CD4-positive, alpha-beta T cell (primary cell): ENCODE measurements at regions of chr3 and their contacts with region 1.

Region 1: GRCh38 chr3:17151598-17152373 is 267.0 kb downstream of the PLCL2 start:
- DNase-seq: peak; percentile 53 to 93 (median 70)
- ATAC-seq: peak; percentile 93
- H3K4me3 ChIP-seq: peak overlapping the region; percentile 10
- H3K4me3 Mint-ChIP-seq: no peak overlapping the region
- H3K27ac ChIP-seq: peak overlapping the region; percentile 44
- H3K27ac Mint-ChIP-seq: peak overlapping the region; percentile 85
- H3K4me1 ChIP-seq: peaks cover 36% of the 10 kb centered on the region
- H3K4me1 Mint-ChIP-seq: peaks cover 34% of the 10 kb centered on the region
- H3K27me3 ChIP-seq: no peaks in the 10 kb centered on the region
- H3K27me3 Mint-ChIP-seq: no peaks in the 10 kb centered on the region
- CTCF ChIP-seq: no peak

Region 2: GRCh38 chr3:16511681-16512434 is 639.9 kb before region 1 on chr3:
- CTCF ChIA-PET with region 1: no interaction called
- POLR2A ChIA-PET with region 1: no interaction called
- intact Hi-C with region 1: no loop called
- DNase-seq: peak; percentile 57 to 93 (median 68)
- ATAC-seq: peak; percentile 83
- H3K4me3 ChIP-seq: peak overlapping the region; percentile 92
- H3K4me3 Mint-ChIP-seq: peak overlapping the region; percentile 91
- H3K27ac ChIP-seq: peak overlapping the region; percentile 46 to 85
- H3K27ac Mint-ChIP-seq: peak overlapping the region; percentile 89
- H3K4me1 ChIP-seq: peaks cover 72% of the 10 kb centered on the region
- H3K4me1 Mint-ChIP-seq: peaks cover 84% of the 10 kb centered on the region
- H3K27me3 ChIP-seq: no peaks in the 10 kb centered on the region
- H3K27me3 Mint-ChIP-seq: no peaks in the 10 kb centered on the region
- CTCF ChIP-seq: no peak

Region 3: GRCh38 chr3:17103579-17103978 is 48.2 kb before region 1 on chr3:
- CTCF ChIA-PET with region 1: no interaction called
- POLR2A ChIA-PET with region 1: no interaction called
- intact Hi-C with region 1: no loop called
- DNase-seq: no peak
- ATAC-seq: no peak
- H3K4me3 ChIP-seq: no peak overlapping the region
- H3K4me3 Mint-ChIP-seq: no peak overlapping the region
- H3K27ac ChIP-seq: no peak overlapping the region
- H3K27ac Mint-ChIP-seq: no peak overlapping the region
- H3K4me1 ChIP-seq: no peaks in the 10 kb centered on the region
- H3K4me1 Mint-ChIP-seq: no peaks in the 10 kb centered on the region
- H3K27me3 ChIP-seq: no peaks in the 10 kb centered on the region
- H3K27me3 Mint-ChIP-seq: no peaks in the 10 kb centered on the region
- CTCF ChIP-seq: no peak

Region 4: DNA sequence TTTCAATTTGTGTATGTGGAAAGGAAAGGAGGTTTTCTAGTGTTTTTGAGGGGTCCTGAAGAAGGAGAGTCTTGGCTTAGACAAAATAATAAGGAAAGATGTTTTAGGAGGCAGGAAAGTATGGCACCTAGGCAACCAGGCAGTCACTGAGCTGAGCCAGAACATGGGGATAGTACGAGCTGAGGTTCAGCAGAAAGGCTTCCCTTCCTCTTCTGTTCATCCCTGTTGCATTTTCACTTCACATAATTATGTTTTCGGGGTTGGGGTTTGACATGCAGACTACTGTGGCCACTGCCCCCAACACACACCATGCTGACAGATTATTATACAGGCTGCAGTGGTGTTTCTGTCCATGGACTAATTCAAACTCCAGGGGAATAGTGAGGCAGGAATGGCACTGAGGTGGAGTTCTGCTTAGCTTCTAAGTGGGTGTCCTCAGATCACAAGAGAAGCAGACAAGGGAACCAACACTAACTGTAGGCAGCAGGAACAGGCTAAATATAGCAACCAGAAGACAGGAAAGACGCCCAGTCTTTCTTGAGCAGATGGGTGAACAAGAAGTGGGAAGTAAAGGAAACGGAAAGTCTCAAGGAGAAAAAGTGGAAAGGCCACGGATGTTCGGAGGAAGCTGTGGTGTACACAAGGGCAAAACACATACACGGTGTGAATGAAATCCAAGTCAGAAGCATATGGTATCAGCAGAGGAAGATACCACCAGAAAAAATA is 38.7 kb after region 1 on chr3:
- CTCF ChIA-PET with region 1: no interaction called
- POLR2A ChIA-PET with region 1: no interaction called
- intact Hi-C with region 1: loop called in 1 of 2 experiments (anchors 1 kb)
- DNase-seq: no peak
- ATAC-seq: no peak
- H3K4me3 ChIP-seq: no peak overlapping the region
- H3K4me3 Mint-ChIP-seq: no peak overlapping the region
- H3K27ac ChIP-seq: no peak overlapping the region
- H3K27ac Mint-ChIP-seq: no peak overlapping the region
- H3K4me1 ChIP-seq: no peaks in the 10 kb centered on the region
- H3K4me1 Mint-ChIP-seq: peaks cover 7% of the 10 kb centered on the region
- H3K27me3 ChIP-seq: no peaks in the 10 kb centered on the region
- H3K27me3 Mint-ChIP-seq: no peaks in the 10 kb centered on the region
- CTCF ChIP-seq: no peak